ENCODE measurements at regions of chr20 and their contacts with region 1.

Region 1: GRCh38 chr20:34876162-34877001 is at the start of gene ACSS2:
- DNase-seq: peak; percentile 100
- H3K4me3 Mint-ChIP-seq: peak within 1 kb of the TSS; percentile 99
- H3K27ac Mint-ChIP-seq: peak within 1 kb of the TSS; percentile 91
- H3K4me1 Mint-ChIP-seq: peaks cover 51% of the 10 kb centered on the region
- H3K27me3 Mint-ChIP-seq: no peaks in the 10 kb centered on the region
- CTCF ChIP-seq: no peak
- total RNA-seq, gene ACSS2: 36.6 and 42.0 TPM in 2 replicates

Region 2: GRCh38 chr20:34850969-34851368 is 25.4 kb before region 1 on chr20:
- CTCF ChIA-PET with region 1: interaction called, 13 read pairs
- POLR2A ChIA-PET with region 1: interaction called, 4 read pairs
- intact Hi-C with region 1: no loop called
- DNase-seq: no peak
- H3K4me3 Mint-ChIP-seq: no peak overlapping the region
- H3K27ac Mint-ChIP-seq: no peak overlapping the region
- H3K4me1 Mint-ChIP-seq: no peaks in the 10 kb centered on the region
- H3K27me3 Mint-ChIP-seq: peaks cover 18% of the 10 kb centered on the region
- CTCF ChIP-seq: no peak

Region 3: DNA sequence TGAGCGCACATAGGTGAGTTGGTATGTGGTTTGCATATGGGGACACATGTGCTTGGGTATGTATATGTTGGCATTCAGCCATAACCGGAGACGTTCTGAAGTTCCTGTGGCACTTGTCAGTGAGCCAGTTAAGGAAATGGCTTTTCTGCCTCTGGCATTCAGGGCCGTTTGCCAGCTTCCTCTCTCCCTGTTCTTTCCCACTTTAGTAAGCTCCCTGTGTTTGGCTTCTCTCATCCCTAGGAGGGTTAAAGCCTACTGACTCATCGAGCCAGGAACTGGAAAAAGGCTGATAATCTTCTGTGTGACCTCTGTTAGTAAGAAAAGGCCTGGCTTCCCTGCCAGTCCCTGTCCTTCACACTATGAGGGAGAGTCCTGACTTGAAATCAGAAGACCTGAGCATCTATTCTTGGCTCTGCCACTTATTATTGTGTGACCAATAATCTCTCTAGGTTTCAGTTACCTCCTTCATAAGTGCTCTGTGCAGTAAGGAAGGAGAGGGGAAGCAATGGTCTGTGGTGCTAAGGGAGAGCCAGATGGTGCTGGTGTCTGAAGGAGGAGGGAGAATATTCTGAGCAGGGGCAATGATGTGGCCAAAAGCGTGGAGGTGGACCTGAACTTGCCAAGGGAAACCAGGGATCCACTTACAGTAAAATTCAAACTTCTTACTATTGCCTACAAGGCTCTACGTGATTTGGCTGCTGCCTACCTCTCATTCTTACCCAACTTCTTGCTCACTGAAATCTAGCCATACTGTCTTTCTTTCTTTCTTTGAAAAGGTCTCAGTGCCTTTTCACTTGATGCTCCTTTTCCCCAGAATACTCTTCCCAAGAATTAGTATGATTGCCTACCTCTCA is 31.5 kb after region 1 on chr20:
- CTCF ChIA-PET with region 1: interaction called, 20 read pairs
- POLR2A ChIA-PET with region 1: interaction called, 44 read pairs
- intact Hi-C with region 1: no loop called
- DNase-seq: peak; percentile 99
- H3K4me3 Mint-ChIP-seq: peak overlapping the region; percentile 26
- H3K27ac Mint-ChIP-seq: peak overlapping the region; percentile 55
- H3K4me1 Mint-ChIP-seq: peaks cover 24% of the 10 kb centered on the region
- H3K27me3 Mint-ChIP-seq: no peaks in the 10 kb centered on the region
- CTCF ChIP-seq: no peak

Region 4: DNA sequence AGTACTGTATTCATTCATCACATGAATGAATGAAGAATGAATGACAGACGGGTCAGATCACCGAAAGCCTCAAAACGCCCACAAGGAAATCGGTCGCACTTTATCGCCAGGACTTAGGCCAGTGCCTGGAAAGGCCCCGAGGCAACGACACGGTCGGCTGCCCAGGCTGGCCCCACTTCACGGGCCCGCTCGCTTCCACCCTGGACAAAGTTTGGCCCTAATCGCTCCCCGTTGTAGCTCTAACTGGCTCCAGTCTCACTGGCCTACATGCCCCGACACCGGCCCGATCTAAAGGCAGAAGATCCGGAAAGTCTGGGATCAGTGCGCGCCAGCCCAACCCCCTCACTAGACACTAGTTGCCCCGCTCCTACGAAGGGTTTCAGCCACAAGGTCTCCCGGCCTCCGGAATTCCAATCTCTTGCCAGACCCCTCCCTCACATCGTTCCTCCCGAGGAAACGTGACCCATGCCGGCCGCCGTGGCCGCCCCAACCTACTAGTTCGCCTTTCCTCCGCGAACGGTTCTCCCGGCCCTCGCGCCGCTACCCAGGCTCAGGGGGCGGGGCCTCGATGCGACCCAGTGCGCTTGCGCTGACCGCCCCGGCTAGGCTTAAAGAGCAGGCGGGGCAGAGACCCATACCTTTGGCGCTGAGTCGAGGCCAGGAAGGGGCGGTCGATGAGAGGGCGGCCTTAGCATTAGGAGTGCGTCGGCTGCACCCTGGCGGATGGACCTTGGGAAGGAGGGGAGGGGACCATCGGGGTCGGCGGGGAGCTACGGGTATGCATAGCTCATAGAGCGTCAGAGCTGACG is 79.1 kb after region 1 on chr20 and contains the starts of genes GSS and MYH7B:
- CTCF ChIA-PET with region 1: interaction called, 279 read pairs
- POLR2A ChIA-PET with region 1: interaction called, 116 read pairs
- intact Hi-C with region 1: loop called (anchors 1 kb)
- DNase-seq: peak; percentile 98
- H3K4me3 Mint-ChIP-seq: peak within 1 kb of the TSS; percentile 95
- H3K27ac Mint-ChIP-seq: peak within 1 kb of the TSS; percentile 97
- H3K4me1 Mint-ChIP-seq: peaks cover 21% of the 10 kb centered on the region
- H3K27me3 Mint-ChIP-seq: no peaks in the 10 kb centered on the region
- CTCF ChIP-seq: peak; percentile 64
- total RNA-seq, gene GSS: 94.6 and 115 TPM in 2 replicates
- total RNA-seq, gene MYH7B: 0.07 and 0.27 TPM in 2 replicates

Region 5: GRCh38 chr20:35092524-35093266 is 216.3 kb after region 1 on chr20 and contains the start of gene TRPC4AP:
- CTCF ChIA-PET with region 1: interaction called, 32 read pairs
- POLR2A ChIA-PET with region 1: interaction called, 8 read pairs
- intact Hi-C with region 1: loop called (anchors 1 kb)
- DNase-seq: peak; percentile 89
- H3K4me3 Mint-ChIP-seq: peak within 1 kb of the TSS; percentile 78
- H3K27ac Mint-ChIP-seq: peak within 1 kb of the TSS; percentile 55
- H3K4me1 Mint-ChIP-seq: peaks cover 27% of the 10 kb centered on the region
- H3K27me3 Mint-ChIP-seq: no peaks in the 10 kb centered on the region
- CTCF ChIP-seq: peak; percentile 96
- total RNA-seq, gene TRPC4AP: 51.8 and 56.3 TPM in 2 replicates

Measured in MCF 10A (cell line).